Activated CD4-positive, alpha-beta memory T cell treated with anti-CD3 and anti-CD28 coated beads for 36 hours (primary cell): ENCODE measurements at regions of chr2 and their contacts with region 1.

Region 1: DNA sequence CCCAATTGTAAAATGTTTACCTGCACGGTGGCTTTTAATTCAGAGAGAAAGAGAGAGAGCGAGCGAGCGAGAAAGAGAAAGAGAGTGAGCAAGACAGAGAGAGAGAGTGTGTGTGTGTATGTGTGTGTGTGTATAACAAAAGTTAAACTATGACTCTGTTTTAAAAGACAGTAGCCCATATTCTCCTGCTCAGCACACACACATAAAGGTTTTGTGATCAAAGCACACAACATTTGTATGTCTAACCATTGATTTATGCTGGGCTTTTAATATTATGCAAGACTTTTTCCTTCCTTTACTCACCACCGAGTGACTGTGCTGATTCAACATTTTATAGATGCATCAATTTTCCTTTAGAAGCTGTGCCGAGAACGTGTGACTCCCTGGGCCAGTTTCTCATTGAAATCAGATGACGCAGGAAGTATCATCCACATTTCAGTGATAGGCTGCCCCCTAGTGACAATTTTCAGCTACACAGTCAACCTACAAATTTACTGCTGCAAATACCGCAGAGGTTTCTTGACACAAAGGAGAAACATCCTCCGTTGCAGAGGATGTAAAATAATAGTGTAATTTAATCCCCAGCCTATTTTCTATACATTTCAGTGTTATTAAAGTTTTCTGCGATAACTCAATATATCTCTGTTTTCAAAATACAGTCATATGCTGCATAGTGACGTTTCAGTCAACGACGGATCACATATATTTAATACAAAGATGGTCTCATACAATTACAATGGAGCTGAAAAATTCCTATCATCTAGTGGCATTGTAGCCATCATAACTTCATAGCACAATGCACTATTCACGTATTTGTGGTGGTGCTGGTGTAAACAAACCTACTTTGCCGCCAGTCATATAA is 165.9 kb upstream of the TANK start:
- DNase-seq: peak; percentile 71
- H3K4me3 Mint-ChIP-seq: no peak overlapping the region
- H3K27ac Mint-ChIP-seq: no peak overlapping the region
- H3K4me1 Mint-ChIP-seq: peaks cover 6% of the 10 kb centered on the region
- H3K27me3 Mint-ChIP-seq: no peaks in the 10 kb centered on the region

Region 2: DNA sequence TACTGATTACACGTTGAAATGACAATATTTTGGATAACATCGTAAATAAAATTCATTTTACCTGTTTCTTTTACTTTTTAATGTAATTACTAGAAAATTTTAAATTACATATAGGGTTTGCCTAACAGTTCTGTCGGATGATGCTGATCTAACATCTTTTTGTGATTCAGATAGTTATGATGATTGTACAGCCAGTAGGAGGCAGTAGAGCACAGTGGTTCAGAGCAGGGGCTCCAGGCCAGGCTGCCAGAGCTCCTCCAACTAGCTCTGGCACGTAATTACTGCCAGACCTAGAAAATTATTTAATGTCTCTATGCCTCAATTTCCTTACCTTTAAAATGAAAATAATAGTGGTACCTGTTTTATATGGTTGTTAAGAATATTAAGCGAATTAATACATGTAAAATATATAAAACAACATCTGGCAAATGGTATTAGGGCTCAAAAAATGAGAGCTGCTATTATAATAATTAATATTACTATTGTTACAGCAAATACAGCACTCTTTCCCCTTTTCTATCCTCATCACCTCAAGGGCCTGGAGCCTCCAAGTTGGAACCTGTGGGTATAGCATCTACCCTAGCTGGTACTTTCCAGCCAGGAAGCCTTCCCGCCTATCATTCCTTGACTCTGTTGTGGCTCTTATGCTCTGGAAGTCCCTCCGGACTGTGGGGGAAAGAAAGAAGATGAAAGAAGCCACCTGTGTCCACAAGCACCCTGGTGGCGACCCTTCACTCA is 884.3 kb before region 1 on chr2:
- CTCF ChIA-PET with region 1: interaction called, 56 read pairs
- POLR2A ChIA-PET with region 1: no interaction called
- intact Hi-C with region 1: loop called (anchors 1 kb)
- DNase-seq: peak; percentile 65
- H3K4me3 Mint-ChIP-seq: no peak overlapping the region
- H3K27ac Mint-ChIP-seq: no peak overlapping the region
- H3K4me1 Mint-ChIP-seq: no peaks in the 10 kb centered on the region
- H3K27me3 Mint-ChIP-seq: peaks cover 21% of the 10 kb centered on the region

Region 3: GRCh38 chr2:160353166-160353565 is 641.2 kb before region 1 on chr2:
- CTCF ChIA-PET with region 1: interaction called, 14 read pairs
- POLR2A ChIA-PET with region 1: no interaction called
- intact Hi-C with region 1: no loop called
- DNase-seq: peak; percentile 48
- H3K4me3 Mint-ChIP-seq: no peak overlapping the region
- H3K27ac Mint-ChIP-seq: no peak overlapping the region
- H3K4me1 Mint-ChIP-seq: peaks cover 64% of the 10 kb centered on the region
- H3K27me3 Mint-ChIP-seq: no peaks in the 10 kb centered on the region

Region 4: GRCh38 chr2:161004379-161004778 is 10.0 kb after region 1 on chr2:
- CTCF ChIA-PET with region 1: interaction called, 14 read pairs
- POLR2A ChIA-PET with region 1: no interaction called
- intact Hi-C with region 1: no loop called
- DNase-seq: no peak
- H3K4me3 Mint-ChIP-seq: no peak overlapping the region
- H3K27ac Mint-ChIP-seq: no peak overlapping the region
- H3K4me1 Mint-ChIP-seq: no peaks in the 10 kb centered on the region
- H3K27me3 Mint-ChIP-seq: peaks cover 20% of the 10 kb centered on the region